ENCODE measurements at regions of chr6 and their contacts with region 1.

Region 1: GRCh38 chr6:26122793-26123674 is 35.8 kb downstream of the HFE start:
- DNase-seq: peak; percentile 97
- H3K4me3 ChIP-seq: peak overlapping the region; percentile 3 to 99 (median 97)
- H3K27ac ChIP-seq: peak overlapping the region; percentile 70
- H3K4me1 ChIP-seq: peaks cover 6% of the 10 kb centered on the region
- H3K27me3 ChIP-seq: no peaks in the 10 kb centered on the region
- CTCF ChIP-seq: no peak
- POLR2A ChIP-seq: peak; percentile 88

Region 2: GRCh38 chr6:25902071-25902470 is 221.0 kb before region 1 on chr6:
- CTCF ChIA-PET with region 1: no interaction called
- POLR2A ChIA-PET with region 1: no interaction called
- dilution Hi-C with region 1: no loop called
- intact Hi-C with region 1: no loop called
- DNase-seq: no peak
- H3K4me3 ChIP-seq: no peak overlapping the region
- H3K27ac ChIP-seq: no peak overlapping the region
- H3K4me1 ChIP-seq: no peaks in the 10 kb centered on the region
- H3K27me3 ChIP-seq: peaks cover 2 to 6% of the 10 kb centered on the region in 2 experiments
- CTCF ChIP-seq: no peak
- POLR2A ChIP-seq: no peak

Region 3: DNA sequence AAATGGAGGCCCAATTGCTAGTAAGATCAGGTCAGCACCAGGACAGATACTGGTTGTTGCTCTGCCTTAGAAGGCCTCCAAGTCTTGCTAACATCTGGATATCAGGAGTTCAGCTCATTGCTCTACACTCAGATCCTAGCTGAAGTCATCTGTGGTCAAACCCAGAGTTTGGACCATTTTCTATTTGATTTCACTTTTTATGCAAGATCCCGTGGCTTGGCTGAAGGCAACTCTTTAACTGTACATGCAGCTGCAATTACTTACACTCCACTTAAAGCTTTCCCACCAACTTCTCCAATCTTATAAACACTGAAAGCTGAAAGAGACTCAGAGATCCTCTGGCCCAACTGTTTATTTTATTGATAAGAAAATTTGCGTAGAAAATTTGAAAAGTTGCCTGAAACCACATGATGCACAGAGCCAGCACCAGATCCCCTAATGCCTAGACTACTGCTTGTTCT is 195.2 kb before region 1 on chr6:
- CTCF ChIA-PET with region 1: no interaction called
- POLR2A ChIA-PET with region 1: no interaction called
- dilution Hi-C with region 1: no loop called
- intact Hi-C with region 1: no loop called
- DNase-seq: no peak
- H3K4me3 ChIP-seq: no peak overlapping the region
- H3K27ac ChIP-seq: no peak overlapping the region
- H3K4me1 ChIP-seq: no peaks in the 10 kb centered on the region
- H3K27me3 ChIP-seq: peaks cover 0 to 2% of the 10 kb centered on the region in 2 experiments
- CTCF ChIP-seq: no peak
- POLR2A ChIP-seq: no peak

Region 4: DNA sequence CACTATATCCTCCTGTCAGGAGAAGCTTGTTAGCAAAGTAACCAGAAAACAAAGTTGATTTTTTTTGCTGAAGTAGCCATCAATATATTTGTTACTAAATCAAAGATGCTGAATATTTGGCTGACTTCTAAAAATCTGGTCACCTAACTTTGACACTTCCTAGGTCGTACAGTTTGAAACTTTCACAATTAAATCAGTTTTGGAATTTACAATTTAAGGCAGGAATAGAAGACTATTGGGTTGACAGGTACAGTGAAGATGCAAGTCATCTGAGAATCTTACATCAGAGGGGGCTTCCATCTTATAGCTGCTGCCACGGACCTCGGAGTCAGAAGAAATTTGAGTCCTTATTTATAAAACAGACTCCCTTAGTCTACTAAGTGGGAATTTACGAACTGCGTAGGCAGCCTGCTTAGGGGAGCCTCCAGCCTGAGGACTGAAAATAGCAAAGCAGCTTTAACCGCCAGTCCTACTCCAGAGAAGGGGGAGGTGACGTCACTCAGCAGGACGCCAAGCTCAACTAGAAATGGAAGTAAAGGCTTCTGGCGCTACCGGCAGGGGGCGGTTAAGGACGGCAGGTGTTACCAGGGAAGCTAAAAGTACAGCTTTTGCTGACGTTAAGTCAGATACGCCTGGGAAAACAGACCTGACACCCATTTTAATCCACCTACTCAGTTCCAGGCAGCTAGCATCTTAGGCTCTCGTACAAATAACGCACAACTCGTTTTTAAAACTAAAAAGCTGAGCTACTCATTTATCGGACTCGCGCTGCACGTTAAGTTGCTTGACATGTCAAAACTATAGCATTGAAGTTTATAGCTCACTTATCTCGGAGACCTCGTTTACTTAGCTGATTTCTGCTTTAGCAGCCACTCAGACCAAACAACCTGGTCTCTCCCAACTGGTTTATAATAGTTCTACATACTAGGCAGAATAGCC is 96.9 kb before region 1 on chr6:
- CTCF ChIA-PET with region 1: interaction called, 7 read pairs
- POLR2A ChIA-PET with region 1: interaction called, 19 read pairs
- dilution Hi-C with region 1: no loop called
- intact Hi-C with region 1: no loop called
- DNase-seq: peak; percentile 96
- H3K4me3 ChIP-seq: peak overlapping the region; percentile 1 to 59 (median 55)
- H3K27ac ChIP-seq: peak overlapping the region; percentile 95
- H3K4me1 ChIP-seq: peaks cover 18% of the 10 kb centered on the region
- H3K27me3 ChIP-seq: no peaks in the 10 kb centered on the region
- CTCF ChIP-seq: peak; percentile 89
- POLR2A ChIP-seq: no peak

Region 5: GRCh38 chr6:26054857-26055669 is 68.0 kb before region 1 on chr6:
- CTCF ChIA-PET with region 1: interaction called, 3 read pairs
- POLR2A ChIA-PET with region 1: interaction called, 6 read pairs
- dilution Hi-C with region 1: no loop called
- intact Hi-C with region 1: loop called (anchors 1 kb)
- DNase-seq: peak; percentile 94
- H3K4me3 ChIP-seq: peak overlapping the region; percentile 62 to 74 (median 65)
- H3K27ac ChIP-seq: peak overlapping the region; percentile 98
- H3K4me1 ChIP-seq: peaks cover 13% of the 10 kb centered on the region
- H3K27me3 ChIP-seq: no peaks in the 10 kb centered on the region
- CTCF ChIP-seq: no peak
- POLR2A ChIP-seq: peak; percentile 98

Region 6: DNA sequence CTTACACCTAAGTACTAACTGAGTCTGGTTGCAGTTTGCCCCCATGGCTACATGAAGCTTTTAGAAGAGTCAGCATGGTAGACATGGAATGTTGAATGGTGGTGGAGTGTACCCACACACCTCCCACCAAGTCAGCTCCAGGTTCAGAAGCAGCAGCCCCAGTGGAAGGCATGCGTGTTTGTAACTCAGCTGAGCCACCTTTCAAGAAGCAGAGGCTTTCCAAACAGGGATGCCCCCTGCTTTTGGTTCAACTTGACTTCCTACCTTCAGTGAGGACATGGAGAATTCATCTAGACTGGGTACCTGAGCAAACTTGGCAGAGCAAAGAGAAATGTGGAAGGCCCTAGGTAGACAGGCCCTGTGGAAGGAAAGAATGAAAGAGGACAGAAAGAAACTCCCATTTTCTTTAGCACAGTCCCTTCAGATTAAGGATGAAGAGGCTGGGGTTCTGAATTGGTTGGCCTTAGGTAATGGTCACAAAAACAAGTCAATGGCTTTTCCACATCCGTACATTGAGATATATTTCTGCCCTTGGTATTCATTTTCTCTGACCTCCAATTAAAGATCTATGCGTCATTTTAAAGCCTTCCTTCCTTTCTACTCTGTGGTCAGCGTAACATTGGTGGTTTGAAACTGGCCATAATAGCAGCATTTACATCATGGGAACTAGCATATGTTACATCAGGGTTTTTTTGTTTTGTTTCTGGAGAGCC is 17.4 kb after region 1 on chr6:
- CTCF ChIA-PET with region 1: interaction called, 3 read pairs
- POLR2A ChIA-PET with region 1: no interaction called
- dilution Hi-C with region 1: no loop called
- intact Hi-C with region 1: loop called (anchors 1 kb)
- DNase-seq: peak; percentile 72
- H3K4me3 ChIP-seq: no peak overlapping the region
- H3K27ac ChIP-seq: no peak overlapping the region
- H3K4me1 ChIP-seq: peaks cover 12% of the 10 kb centered on the region
- H3K27me3 ChIP-seq: peaks cover 6 to 14% of the 10 kb centered on the region in 2 experiments
- CTCF ChIP-seq: no peak
- POLR2A ChIP-seq: no peak

Region 7: DNA sequence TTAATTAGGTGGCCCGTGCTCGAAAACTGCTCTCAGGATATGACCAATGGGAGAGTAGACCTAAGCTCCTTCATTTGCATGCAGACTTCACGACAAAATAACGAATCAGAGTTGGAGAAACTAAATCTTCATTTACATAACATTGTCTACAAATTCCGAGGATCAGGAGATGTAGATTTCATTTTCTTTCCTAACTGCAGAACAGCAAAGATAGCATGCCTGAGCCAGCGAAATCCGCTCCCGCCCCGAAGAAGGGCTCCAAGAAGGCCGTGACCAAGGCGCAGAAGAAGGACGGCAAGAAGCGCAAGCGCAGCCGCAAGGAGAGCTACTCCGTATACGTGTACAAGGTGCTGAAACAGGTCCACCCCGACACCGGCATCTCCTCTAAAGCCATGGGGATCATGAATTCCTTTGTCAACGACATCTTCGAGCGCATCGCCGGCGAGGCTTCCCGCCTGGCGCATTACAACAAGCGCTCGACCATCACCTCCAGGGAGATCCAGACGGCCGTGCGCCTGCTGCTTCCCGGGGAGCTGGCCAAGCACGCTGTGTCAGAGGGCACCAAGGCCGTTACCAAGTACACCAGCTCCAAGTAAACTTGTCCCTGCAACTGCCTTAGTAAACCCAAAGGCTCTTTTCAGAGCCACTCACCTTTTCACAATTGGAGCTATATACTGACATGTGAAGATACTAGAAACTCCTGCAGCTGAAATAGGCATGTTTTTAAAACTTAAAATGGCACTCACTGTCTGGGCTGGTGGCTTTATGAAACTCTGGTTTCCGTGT is 60.7 kb after region 1 on chr6:
- CTCF ChIA-PET with region 1: interaction called, 5 read pairs
- POLR2A ChIA-PET with region 1: interaction called, 28 read pairs
- dilution Hi-C with region 1: no loop called
- intact Hi-C with region 1: no loop called
- DNase-seq: peak; percentile 93
- H3K4me3 ChIP-seq: peak overlapping the region; percentile 13 to 66 (median 34)
- H3K27ac ChIP-seq: peak overlapping the region; percentile 58
- H3K4me1 ChIP-seq: peaks cover 20% of the 10 kb centered on the region
- H3K27me3 ChIP-seq: no peaks in the 10 kb centered on the region
- CTCF ChIP-seq: no peak
- POLR2A ChIP-seq: peak; percentile 59

Region 8: GRCh38 chr6:26216356-26216885 is 93.4 kb after region 1 on chr6:
- CTCF ChIA-PET with region 1: interaction called, 10 read pairs
- POLR2A ChIA-PET with region 1: interaction called, 53 read pairs
- dilution Hi-C with region 1: no loop called
- intact Hi-C with region 1: loop called (anchors 1 kb)
- DNase-seq: peak; percentile 99
- H3K4me3 ChIP-seq: peak overlapping the region in 2 of 3 experiments; percentile 42 to 82
- H3K27ac ChIP-seq: peak overlapping the region; percentile 89
- H3K4me1 ChIP-seq: peaks cover 6% of the 10 kb centered on the region
- H3K27me3 ChIP-seq: no peaks in the 10 kb centered on the region
- CTCF ChIP-seq: no peak
- POLR2A ChIP-seq: peak; percentile 99

Region 9: DNA sequence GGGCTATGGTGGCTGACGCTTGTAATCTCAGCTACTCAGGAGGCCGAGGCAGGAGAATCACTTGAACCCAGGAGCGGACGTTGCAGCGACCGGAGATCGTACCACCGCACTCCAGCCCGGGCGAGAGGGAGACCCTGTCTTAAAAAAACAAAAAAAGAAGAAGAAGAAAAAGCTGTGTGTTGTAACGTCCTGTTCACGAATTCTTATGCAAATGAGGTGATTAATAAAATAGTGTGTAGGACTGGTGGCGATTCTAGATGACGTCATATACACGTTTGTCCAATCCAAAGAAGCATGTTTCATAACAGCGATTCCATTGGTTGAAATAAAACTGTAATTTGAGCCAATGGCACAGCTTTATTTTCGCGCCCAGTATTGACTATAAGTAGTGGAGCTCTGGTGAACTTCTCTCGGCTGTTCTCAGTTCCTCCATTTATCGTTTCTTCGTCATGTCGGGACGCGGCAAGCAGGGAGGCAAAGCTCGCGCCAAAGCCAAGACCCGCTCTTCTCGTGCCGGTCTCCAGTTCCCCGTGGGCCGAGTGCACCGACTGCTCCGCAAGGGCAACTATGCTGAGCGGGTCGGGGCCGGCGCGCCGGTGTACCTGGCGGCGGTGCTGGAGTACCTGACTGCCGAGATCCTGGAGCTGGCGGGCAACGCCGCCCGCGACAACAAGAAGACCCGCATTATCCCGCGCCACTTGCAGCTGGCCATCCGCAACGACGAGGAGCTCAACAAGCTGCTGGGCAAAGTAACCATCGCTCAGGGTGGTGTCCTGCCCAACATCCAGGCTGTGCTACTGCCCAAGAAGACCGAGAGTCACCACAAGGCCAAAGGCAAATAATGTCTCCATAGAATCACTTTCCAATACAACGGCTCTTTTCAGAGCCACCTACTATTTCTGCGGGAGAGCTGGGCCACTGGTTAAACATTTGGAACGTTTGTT is 1742.1 kb after region 1 on chr6:
- CTCF ChIA-PET with region 1: no interaction called
- POLR2A ChIA-PET with region 1: no interaction called
- dilution Hi-C with region 1: no loop called
- intact Hi-C with region 1: loop called (anchors 5 kb)
- DNase-seq: peak; percentile 98
- H3K4me3 ChIP-seq: peak overlapping the region; percentile 60 to 71 (median 66)
- H3K27ac ChIP-seq: peak overlapping the region; percentile 82
- H3K4me1 ChIP-seq: peaks cover 10% of the 10 kb centered on the region
- H3K27me3 ChIP-seq: no peaks in the 10 kb centered on the region
- CTCF ChIP-seq: no peak
- POLR2A ChIP-seq: peak; percentile 77

Measured in endothelial cell of umbilical vein (primary cell).